ENCODE measurements at regions of chr17 and their contacts with region 1.

Region 1: DNA sequence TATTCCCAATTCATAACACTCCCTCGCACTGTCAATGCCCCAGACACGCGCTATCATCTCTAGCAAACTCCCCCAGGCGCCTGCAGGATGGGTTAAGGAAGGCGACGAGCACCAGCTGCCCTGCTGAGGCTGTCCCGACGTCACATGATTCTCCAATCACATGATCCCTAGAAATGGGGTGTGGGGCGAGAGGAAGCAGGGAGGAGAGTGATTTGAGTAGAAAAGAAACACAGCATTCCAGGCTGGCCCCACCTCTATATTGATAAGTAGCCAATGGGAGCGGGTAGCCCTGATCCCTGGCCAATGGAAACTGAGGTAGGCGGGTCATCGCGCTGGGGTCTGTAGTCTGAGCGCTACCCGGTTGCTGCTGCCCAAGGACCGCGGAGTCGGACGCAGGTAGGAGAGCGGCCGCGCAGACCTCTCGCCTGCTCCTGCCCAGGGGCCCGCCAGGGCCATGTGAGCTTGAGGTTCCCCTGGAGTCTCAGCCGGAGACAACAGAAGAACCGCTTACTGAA is at the start of gene GRN:
- DNase-seq: peak; percentile 95 to 98 (median 97)
- H3K4me3 ChIP-seq: peak within 1 kb of the TSS; percentile 71 to 98 (median 92)
- H3K4me3 Mint-ChIP-seq: peak within 1 kb of the TSS; percentile 96 to 99
- H3K27ac ChIP-seq: peak within 1 kb of the TSS; percentile 88 to 98
- H3K27ac Mint-ChIP-seq: peak within 1 kb of the TSS; percentile 93 to 99 (median 98)
- H3K4me1 ChIP-seq: peaks cover 61 to 69% of the 10 kb centered on the region in 2 donors
- H3K4me1 Mint-ChIP-seq: peaks cover 68% of the 10 kb centered on the region
- H3K27me3 ChIP-seq: no peaks in the 10 kb centered on the region
- H3K27me3 Mint-ChIP-seq: peaks cover 0 to 2% (median 0%) of the 10 kb centered on the region in 3 donors
- CTCF ChIP-seq: no peak
- polyA plus RNA-seq, gene GRN: 1,303 to 1,960 (median 1,361) TPM

Region 2: DNA sequence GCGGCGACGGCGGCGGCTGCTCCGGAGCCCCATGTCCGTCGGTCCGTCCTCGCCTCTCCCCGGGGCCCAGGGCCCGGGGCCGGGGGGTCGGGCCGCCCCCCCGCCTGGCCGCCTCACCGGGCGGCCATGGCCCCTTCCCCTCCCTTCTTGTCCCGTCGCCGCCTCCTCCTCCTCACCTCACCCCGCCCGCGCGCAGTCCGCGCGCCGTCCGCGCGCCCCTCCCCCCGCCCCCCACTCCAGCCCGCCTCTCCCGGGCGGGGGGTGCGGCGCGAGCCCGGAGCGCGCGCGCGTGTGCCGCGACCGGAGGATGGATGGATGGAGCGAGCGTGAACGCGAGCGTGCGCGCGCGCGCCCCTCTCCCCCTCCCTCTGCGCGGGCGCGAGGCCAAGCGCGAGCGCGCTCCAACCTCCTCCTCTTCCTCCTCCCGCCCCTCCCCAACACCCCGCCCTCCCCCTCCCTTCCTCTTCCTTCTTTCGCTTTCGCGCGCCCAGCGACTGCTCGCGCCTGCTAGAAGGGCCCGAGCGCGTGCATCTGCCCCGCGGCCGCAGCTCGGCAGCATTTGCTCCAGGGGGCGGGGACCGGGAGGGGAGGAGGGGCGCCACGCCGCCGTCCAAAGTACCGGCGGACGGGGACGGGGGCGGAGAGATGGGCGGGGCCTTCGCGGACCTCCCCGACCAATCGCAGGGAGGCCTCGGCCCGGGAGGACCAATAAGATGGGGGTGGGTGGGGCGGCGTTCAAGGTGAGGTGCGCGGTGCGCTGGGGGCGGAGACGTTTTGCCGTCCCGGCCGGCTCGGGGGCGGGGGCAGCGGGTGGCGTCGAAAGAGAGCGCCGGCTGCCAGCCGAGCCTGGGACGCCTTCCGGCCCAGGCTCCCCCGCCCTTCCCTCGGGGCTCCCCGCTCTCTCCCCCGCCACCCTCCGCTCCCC is 145.2 kb before region 1 on chr17 and contains the start of gene ATXN7L3:
- intact Hi-C with region 1: loop called in 1 of 2 experiments (anchors 5 kb)
- DNase-seq: peak; percentile 94 to 98 (median 96)
- H3K4me3 ChIP-seq: peak within 1 kb of the TSS; percentile 94 to 97 (median 97)
- H3K4me3 Mint-ChIP-seq: peak within 1 kb of the TSS; percentile 91 to 92
- H3K27ac ChIP-seq: peak within 1 kb of the TSS; percentile 94
- H3K27ac Mint-ChIP-seq: peak within 1 kb of the TSS; percentile 92 to 98 (median 95)
- H3K4me1 ChIP-seq: peaks cover 48 to 51% of the 10 kb centered on the region in 2 donors
- H3K4me1 Mint-ChIP-seq: peaks cover 53% of the 10 kb centered on the region
- H3K27me3 ChIP-seq: no peaks in the 10 kb centered on the region
- H3K27me3 Mint-ChIP-seq: peaks cover 0 to 2% (median 0%) of the 10 kb centered on the region in 3 donors
- CTCF ChIP-seq: no peak
- polyA plus RNA-seq, gene ATXN7L3: 8.5 to 60.9 (median 9.9) TPM

Region 3: GRCh38 chr17:44279666-44280391 is 65.2 kb before region 1 on chr17:
- intact Hi-C with region 1: loop called in 1 of 2 experiments (anchors 5 kb)
- DNase-seq: peak; percentile 94 to 98 (median 97)
- H3K4me3 ChIP-seq: peak overlapping the region in 1 of 3 experiments; percentile 46
- H3K4me3 Mint-ChIP-seq: peak overlapping the region; percentile 64 to 70
- H3K27ac ChIP-seq: peak overlapping the region; percentile 64 to 80
- H3K27ac Mint-ChIP-seq: peak overlapping the region; percentile 92 to 97 (median 94)
- H3K4me1 ChIP-seq: peaks cover 23 to 25% of the 10 kb centered on the region in 2 donors
- H3K4me1 Mint-ChIP-seq: peaks cover 30% of the 10 kb centered on the region
- H3K27me3 ChIP-seq: peaks cover 0 to 7% of the 10 kb centered on the region in 2 donors
- H3K27me3 Mint-ChIP-seq: peaks cover 24 to 33% (median 28%) of the 10 kb centered on the region in 3 donors
- CTCF ChIP-seq: no peak

Region 4: DNA sequence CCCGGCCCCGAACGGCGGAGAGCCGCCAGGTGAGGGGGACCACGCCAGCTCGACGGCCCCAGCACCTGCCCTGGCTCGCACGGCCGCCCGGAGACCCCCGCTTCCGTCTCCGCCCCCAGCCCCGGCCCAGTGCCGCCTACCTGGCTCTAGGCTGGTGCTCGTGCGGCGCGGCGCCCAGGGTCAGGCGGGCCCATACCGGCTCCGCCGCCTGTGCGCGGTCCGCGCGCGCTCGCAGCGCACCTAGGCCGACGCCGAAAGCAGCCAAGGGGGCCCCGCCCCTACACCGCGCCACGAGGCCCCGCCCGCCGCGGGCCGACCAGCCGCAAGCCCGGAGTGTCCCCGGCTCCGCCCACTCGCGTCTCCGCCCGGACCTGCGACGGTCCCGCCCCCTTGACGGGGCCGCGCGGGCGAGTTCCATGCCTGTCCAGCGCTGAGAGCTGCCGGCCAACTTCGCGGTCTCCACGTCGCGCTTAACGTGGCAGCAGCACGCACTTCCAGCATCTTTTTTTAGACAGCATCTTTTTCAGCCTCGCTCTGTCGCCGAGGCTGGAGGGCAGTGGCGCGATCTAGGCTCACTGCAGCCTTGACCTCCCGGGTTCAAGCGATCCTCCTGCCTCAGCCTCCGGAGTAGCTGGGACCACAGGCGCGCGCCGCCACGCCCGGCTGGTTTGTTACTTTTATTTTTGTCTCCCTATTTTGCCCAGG is 20.3 kb before region 1 on chr17 and contains the start of gene SLC25A39:
- intact Hi-C with region 1: loop called in 1 of 2 experiments (anchors 2 kb)
- DNase-seq: peak; percentile 91 to 93 (median 92)
- H3K4me3 ChIP-seq: peak within 1 kb of the TSS; percentile 47 to 85 (median 71)
- H3K4me3 Mint-ChIP-seq: peak within 1 kb of the TSS; percentile 89 to 92
- H3K27ac ChIP-seq: peak within 1 kb of the TSS; percentile 71 to 87
- H3K27ac Mint-ChIP-seq: peak within 1 kb of the TSS; percentile 92 to 96 (median 95)
- H3K4me1 ChIP-seq: peaks cover 29 to 39% of the 10 kb centered on the region in 2 donors
- H3K4me1 Mint-ChIP-seq: peaks cover 34% of the 10 kb centered on the region
- H3K27me3 ChIP-seq: no peaks in the 10 kb centered on the region
- H3K27me3 Mint-ChIP-seq: no peaks in the 10 kb centered on the region
- CTCF ChIP-seq: no peak
- polyA plus RNA-seq, gene SLC25A39: 64.0 to 74.8 (median 64.5) TPM

Measured in CD14-positive monocyte (primary cell).